AG04449 (cell line): ENCODE measurements at regions of chr6 and their contacts with region 1.

Region 1: DNA sequence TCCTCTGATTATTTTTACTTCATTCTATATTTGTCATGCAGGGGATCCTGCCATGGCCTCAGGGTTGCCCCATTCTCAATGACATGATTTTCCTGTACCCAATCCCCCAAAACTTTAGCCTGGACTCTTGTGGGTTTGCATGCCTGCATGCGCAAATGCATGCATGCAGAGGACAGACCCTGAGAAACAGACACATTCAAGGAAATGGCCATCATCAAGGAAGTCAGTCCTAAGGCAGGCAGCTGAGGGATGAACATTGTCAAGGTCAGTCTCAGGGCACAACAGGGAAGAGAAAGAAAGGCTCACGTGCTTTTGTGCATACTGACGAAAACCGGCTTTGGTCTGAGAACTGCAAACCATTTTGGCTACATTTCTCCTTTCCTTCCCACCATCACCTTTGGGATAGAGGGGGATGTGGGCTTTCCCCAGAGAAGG is 13.1 kb downstream of the NEDD9 start:
- DNase-seq: no peak
- H3K4me3 ChIP-seq: no peak overlapping the region
- CTCF ChIP-seq: no peak

Region 2: DNA sequence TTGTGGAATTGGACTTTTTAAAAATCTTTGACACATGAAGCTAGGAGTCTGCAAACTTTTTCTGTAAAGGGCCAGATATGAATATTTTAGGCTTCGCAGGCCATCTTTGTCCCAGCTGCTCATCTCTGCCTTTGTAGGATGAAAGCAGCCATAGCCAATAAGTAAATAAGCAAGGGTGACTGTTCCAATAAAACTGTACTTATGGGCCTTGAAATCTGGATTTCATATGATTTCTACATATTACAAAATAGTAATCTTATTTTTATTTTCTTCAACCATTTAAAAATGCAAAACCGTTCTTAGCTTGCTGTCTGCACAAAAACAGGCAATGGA is 484.4 kb before region 1 on chr6:
- CTCF ChIA-PET with region 1: no interaction called
- POLR2A ChIA-PET with region 1: no interaction called
- DNase-seq: no peak
- H3K4me3 ChIP-seq: no peak overlapping the region
- CTCF ChIP-seq: no peak

Region 3: GRCh38 chr6:11232193-11232769 is 12.9 kb after region 1 on chr6 and contains the start of gene NEDD9:
- CTCF ChIA-PET with region 1: interaction called, 10 read pairs
- POLR2A ChIA-PET with region 1: interaction called, 3 read pairs
- DNase-seq: peak; percentile 79
- H3K4me3 ChIP-seq: peak within 1 kb of the TSS; percentile 85
- CTCF ChIP-seq: no peak